Endothelial cell of umbilical vein (primary cell): ENCODE measurements at regions of chr15 and their contacts with region 1.

Region 1: GRCh38 chr15:67456677-67457529 is 64.0 kb upstream of the C15orf61 start:
- DNase-seq: peak; percentile 70
- H3K4me3 ChIP-seq: no peak overlapping the region
- H3K27ac ChIP-seq: no peak overlapping the region
- H3K4me1 ChIP-seq: no peaks in the 10 kb centered on the region
- H3K27me3 ChIP-seq: peaks cover 7 to 13% of the 10 kb centered on the region in 2 experiments
- CTCF ChIP-seq: peak; percentile 87 to 95
- POLR2A ChIP-seq: no peak

Region 2: GRCh38 chr15:67468416-67468815 is 11.5 kb after region 1 on chr15:
- CTCF ChIA-PET with region 1: interaction called, 14 read pairs
- POLR2A ChIA-PET with region 1: no interaction called
- dilution Hi-C with region 1: no loop called
- intact Hi-C with region 1: no loop called
- DNase-seq: no peak
- H3K4me3 ChIP-seq: no peak overlapping the region
- H3K27ac ChIP-seq: no peak overlapping the region
- H3K4me1 ChIP-seq: no peaks in the 10 kb centered on the region
- H3K27me3 ChIP-seq: no peaks in the 10 kb centered on the region
- CTCF ChIP-seq: no peak
- POLR2A ChIP-seq: no peak

Region 3: GRCh38 chr15:67542420-67543347 is 85.8 kb after region 1 on chr15 and contains the start of gene MAP2K5:
- CTCF ChIA-PET with region 1: interaction called, 7 read pairs
- POLR2A ChIA-PET with region 1: no interaction called
- dilution Hi-C with region 1: no loop called
- intact Hi-C with region 1: loop called (anchors 10 kb)
- DNase-seq: peak; percentile 77
- H3K4me3 ChIP-seq: peak within 1 kb of the TSS; percentile 67 to 99 (median 96)
- H3K27ac ChIP-seq: peak within 1 kb of the TSS; percentile 65
- H3K4me1 ChIP-seq: peaks cover 8% of the 10 kb centered on the region
- H3K27me3 ChIP-seq: no peaks in the 10 kb centered on the region
- CTCF ChIP-seq: no peak
- POLR2A ChIP-seq: peak; percentile 84
- total RNA-seq, gene MAP2K5: 24.2 and 24.7 TPM in 2 replicates

Region 4: GRCh38 chr15:67731112-67731761 is 274.3 kb after region 1 on chr15:
- CTCF ChIA-PET with region 1: no interaction called
- POLR2A ChIA-PET with region 1: no interaction called
- dilution Hi-C with region 1: no loop called
- intact Hi-C with region 1: no loop called
- DNase-seq: no peak
- H3K4me3 ChIP-seq: no peak overlapping the region
- H3K27ac ChIP-seq: no peak overlapping the region
- H3K4me1 ChIP-seq: no peaks in the 10 kb centered on the region
- H3K27me3 ChIP-seq: no peaks in the 10 kb centered on the region
- CTCF ChIP-seq: no peak
- POLR2A ChIP-seq: no peak